Activated CD4-positive, alpha-beta T cell treated with anti-CD3 and anti-CD28 coated beads for 36 hours (primary cell): ENCODE measurements at regions of chr2 and their contacts with region 1.

Region 1: DNA sequence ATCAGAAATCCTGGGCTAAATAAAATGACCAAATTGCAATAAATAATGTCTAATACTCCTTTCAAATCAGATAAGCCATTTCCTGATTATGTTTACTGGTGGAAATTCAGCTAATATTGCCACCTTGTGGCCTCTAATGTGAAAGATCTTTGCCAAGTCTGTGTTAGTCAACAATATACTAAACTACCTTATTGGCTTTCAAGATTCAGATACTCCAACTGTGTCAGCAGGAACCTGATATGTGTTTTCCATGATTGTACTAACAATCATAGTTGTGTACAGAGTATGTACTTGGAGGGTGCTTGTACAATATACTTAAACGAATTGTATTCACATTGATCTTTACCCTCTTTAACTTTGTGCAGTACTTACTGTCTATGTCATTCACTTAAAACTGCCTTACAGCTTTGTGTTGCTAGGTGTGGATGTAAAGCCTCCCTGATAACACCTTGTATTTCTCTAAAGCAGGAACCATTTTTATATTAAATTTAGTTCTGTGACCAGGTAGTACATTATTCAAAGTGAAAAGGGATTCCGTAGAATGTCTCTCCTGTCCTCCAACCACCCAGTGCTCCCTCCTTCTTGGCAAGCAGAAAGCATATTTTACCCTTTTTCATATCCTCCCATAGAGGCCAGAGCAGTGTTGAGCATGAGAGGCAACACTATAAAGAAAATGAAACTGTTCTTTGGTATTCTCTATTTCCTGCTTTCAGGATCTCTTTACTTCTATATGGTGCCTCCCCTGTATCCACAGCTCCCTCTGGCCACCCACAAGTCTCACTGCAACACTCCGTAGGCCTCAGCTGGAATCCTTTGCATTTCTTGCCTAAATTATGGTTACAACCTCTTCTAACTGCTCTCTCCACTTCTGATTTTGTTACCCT is 75.2 kb upstream of the C2orf15 start:
- DNase-seq: peak; percentile 46
- ATAC-seq: peak; percentile 98
- H3K4me3 Mint-ChIP-seq: no peak overlapping the region
- H3K27ac Mint-ChIP-seq: no peak overlapping the region
- H3K4me1 Mint-ChIP-seq: no peaks in the 10 kb centered on the region
- H3K27me3 Mint-ChIP-seq: no peaks in the 10 kb centered on the region

Region 2: DNA sequence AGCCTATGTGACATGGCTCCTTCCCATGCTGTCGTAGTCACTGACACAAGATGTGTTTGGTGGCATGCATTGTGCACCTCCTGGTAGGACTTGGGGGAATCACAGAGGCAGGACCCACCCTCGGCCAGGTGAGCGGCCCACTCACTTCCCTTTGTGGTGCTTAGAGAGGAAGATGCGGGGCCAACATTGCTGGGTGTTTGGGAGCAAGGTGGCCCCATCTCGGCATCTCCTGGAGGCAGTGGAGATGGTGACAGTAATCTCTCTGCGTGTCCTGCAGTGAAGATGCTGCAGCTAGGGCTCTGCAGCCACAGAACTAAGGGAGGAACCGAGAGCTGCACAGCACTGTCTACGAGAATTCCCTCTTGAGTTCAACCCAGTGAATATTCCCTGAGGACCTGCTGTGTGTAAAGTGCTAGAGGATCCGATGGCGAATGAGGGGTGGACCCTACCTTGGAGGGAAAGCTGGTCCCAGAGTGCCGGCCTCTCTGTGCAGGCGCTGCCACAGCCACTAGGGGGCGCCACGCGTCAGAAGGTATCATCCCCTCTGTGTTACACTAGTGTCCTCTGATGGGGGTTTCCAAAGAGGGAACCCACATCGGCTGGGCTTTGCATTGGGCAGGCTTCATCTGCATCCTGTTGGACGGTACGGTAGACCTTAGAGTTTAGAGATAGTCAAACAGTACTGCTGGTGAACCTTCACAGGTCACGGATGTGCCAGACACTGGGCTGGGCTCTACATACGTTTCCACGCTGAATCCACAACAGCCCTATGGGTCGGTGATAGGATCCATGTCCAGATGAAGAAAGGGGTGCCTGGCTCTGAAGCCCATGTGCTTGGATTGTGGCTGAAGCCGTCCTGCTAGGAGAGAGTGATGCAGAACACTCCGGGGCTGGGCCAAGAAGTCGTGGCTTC is 497.2 kb before region 1 on chr2:
- CTCF ChIA-PET with region 1: interaction called, 4 read pairs
- POLR2A ChIA-PET with region 1: no interaction called
- intact Hi-C with region 1: loop called in 1 of 2 experiments (anchors 2 kb)
- DNase-seq: peak; percentile 86
- ATAC-seq: peak; percentile 89
- H3K4me3 Mint-ChIP-seq: no peak overlapping the region
- H3K27ac Mint-ChIP-seq: no peak overlapping the region
- H3K4me1 Mint-ChIP-seq: peaks cover 4% of the 10 kb centered on the region
- H3K27me3 Mint-ChIP-seq: no peaks in the 10 kb centered on the region

Region 3: DNA sequence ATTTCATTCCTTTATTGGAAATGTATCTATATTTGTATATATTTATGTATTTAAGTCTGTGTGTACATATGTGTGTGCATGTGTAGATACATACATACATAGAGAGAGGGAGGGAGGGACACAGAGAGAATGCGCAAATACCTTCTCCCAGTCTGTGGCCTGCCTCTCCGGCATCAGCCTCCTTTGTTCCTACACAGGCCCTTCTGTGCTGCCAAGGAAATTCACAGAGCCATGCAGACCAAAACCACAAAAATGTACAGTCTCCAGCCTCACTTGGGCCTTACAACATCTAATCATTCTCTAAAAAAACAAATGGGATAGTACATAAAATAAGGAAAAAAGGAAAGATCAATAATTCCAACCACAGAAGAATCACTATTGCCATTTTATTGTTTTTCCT is 121.5 kb before region 1 on chr2:
- CTCF ChIA-PET with region 1: interaction called, 4 read pairs
- POLR2A ChIA-PET with region 1: no interaction called
- intact Hi-C with region 1: loop called in 1 of 2 experiments (anchors 10 kb)
- DNase-seq: no peak
- ATAC-seq: no peak
- H3K4me3 Mint-ChIP-seq: no peak overlapping the region
- H3K27ac Mint-ChIP-seq: no peak overlapping the region
- H3K4me1 Mint-ChIP-seq: no peaks in the 10 kb centered on the region
- H3K27me3 Mint-ChIP-seq: peaks cover 12% of the 10 kb centered on the region

Region 4: GRCh38 chr2:99190548-99190947 is 124.2 kb after region 1 on chr2:
- CTCF ChIA-PET with region 1: no interaction called
- POLR2A ChIA-PET with region 1: no interaction called
- intact Hi-C with region 1: no loop called
- DNase-seq: no peak
- ATAC-seq: no peak
- H3K4me3 Mint-ChIP-seq: no peak overlapping the region
- H3K27ac Mint-ChIP-seq: no peak overlapping the region
- H3K4me1 Mint-ChIP-seq: peaks cover 13% of the 10 kb centered on the region
- H3K27me3 Mint-ChIP-seq: no peaks in the 10 kb centered on the region